Activated CD4-positive, alpha-beta T cell treated with anti-CD3 and anti-CD28 coated beads for 36 hours (primary cell): ENCODE measurements at regions of chr9 and their contacts with region 1.

Region 1: GRCh38 chr9:19184144-19184917 is 46.2 kb upstream of the DENND4C start:
- DNase-seq: peak; percentile 91
- ATAC-seq: peak; percentile 99
- H3K4me3 Mint-ChIP-seq: peak overlapping the region; percentile 56
- H3K27ac Mint-ChIP-seq: peak overlapping the region; percentile 91
- H3K4me1 Mint-ChIP-seq: peaks cover 21% of the 10 kb centered on the region
- H3K27me3 Mint-ChIP-seq: no peaks in the 10 kb centered on the region

Region 2: GRCh38 chr9:18741945-18742344 is 442.4 kb before region 1 on chr9:
- CTCF ChIA-PET with region 1: no interaction called
- POLR2A ChIA-PET with region 1: no interaction called
- intact Hi-C with region 1: no loop called
- DNase-seq: no peak
- ATAC-seq: no peak
- H3K4me3 Mint-ChIP-seq: no peak overlapping the region
- H3K27ac Mint-ChIP-seq: no peak overlapping the region
- H3K4me1 Mint-ChIP-seq: no peaks in the 10 kb centered on the region
- H3K27me3 Mint-ChIP-seq: no peaks in the 10 kb centered on the region

Region 3: DNA sequence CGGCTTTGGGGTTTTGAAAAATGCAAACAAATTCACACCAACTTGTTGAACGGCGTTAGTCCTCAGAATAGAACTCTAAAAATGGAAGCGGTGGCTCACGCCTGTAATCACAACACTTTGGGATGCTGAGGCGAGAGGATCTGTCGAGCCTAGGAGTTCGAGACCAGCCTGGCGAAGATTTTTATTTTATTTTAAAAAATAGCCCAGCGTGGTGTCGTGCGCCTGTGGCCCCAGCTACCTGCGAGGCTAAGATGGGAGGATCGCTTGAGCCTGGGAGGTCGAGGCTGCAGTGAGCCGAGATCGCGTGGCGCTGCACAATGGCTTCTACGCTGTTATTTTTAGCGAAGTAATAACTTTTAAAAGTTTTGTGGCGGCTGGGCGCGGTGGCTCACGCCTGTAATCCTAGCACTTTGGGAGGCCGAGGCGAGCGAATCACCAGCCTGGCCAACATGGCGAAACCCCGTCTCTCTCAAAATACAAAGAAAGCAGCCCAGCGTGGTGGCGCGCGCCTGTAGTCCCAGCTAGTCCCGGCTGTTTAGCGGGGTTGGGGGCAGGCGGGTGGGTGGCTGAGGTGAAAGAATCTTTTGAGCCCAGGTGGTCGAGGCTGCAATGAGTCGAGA is 56.3 kb before region 1 on chr9:
- CTCF ChIA-PET with region 1: no interaction called
- POLR2A ChIA-PET with region 1: no interaction called
- intact Hi-C with region 1: loop called (anchors 1 to 2 kb)
- DNase-seq: peak; percentile 54
- ATAC-seq: peak; percentile 14
- H3K4me3 Mint-ChIP-seq: peak overlapping the region; percentile 92
- H3K27ac Mint-ChIP-seq: peak overlapping the region; percentile 88
- H3K4me1 Mint-ChIP-seq: peaks cover 58% of the 10 kb centered on the region
- H3K27me3 Mint-ChIP-seq: no peaks in the 10 kb centered on the region

Region 4: DNA sequence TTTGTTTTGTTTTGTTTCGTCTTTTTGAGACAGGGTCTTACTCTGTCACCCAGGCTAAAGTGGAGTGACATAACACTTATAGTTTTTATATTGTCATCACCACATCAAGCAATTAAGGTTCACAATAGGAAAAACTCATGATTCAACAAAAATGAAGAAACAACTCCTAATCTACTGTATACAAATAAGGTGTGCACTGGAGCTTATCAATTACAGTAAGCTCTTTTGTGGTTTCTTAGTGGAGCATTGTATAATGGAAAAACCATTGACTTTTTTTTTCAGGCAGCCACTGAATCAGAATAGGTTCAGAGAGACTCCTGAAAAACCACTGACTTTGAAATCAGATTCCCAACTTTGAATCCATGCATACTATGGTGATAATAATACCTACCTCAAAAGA is 46.2 kb before region 1 on chr9:
- CTCF ChIA-PET with region 1: no interaction called
- POLR2A ChIA-PET with region 1: no interaction called
- intact Hi-C with region 1: no loop called
- DNase-seq: no peak
- ATAC-seq: no peak
- H3K4me3 Mint-ChIP-seq: no peak overlapping the region
- H3K27ac Mint-ChIP-seq: no peak overlapping the region
- H3K4me1 Mint-ChIP-seq: peaks cover 9% of the 10 kb centered on the region
- H3K27me3 Mint-ChIP-seq: no peaks in the 10 kb centered on the region

Region 5: DNA sequence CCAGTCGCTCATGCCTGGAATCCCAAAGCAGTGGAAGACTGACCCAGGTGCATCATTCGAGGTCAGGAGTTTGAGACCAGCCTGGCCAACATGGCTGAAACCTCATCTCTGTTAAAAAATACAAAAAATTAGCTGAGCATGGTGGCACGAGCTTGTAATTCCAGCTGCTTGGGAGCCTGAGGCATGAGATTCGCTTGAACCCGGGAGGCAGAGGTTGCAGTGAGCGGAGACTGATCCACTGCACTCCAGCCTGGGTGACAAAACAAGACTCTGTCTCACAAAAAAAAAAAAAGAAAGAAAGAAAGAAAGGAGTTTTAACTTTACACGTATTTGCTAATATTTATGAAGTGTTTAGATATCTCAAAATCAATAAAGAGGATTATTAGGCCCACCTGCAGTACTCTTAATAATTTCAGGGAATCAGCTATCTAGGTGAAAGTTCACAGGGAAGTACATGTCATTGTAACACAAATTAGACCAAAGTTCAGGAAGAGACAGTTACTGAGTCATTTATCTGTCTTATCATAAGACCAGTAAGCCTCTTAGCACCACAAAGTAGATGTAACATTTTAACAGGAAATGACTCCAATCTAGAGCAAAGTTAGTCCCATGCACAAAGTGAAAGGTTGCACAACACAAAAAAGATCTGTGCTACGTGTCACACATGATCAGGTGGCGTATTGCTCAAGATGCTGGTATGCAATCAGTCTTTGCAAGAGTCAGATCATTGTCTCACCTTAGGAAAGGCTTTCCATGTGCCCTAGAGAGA is 22.9 kb before region 1 on chr9:
- CTCF ChIA-PET with region 1: no interaction called
- POLR2A ChIA-PET with region 1: no interaction called
- intact Hi-C with region 1: loop called in 1 of 2 experiments (anchors 1 kb)
- DNase-seq: peak; percentile 78
- ATAC-seq: peak; percentile 98
- H3K4me3 Mint-ChIP-seq: peak overlapping the region; percentile 46
- H3K27ac Mint-ChIP-seq: peak overlapping the region; percentile 76
- H3K4me1 Mint-ChIP-seq: peaks cover 25% of the 10 kb centered on the region
- H3K27me3 Mint-ChIP-seq: no peaks in the 10 kb centered on the region

Region 6: GRCh38 chr9:19408693-19409400 is 224.5 kb after region 1 on chr9 and contains the start of gene ACER2:
- CTCF ChIA-PET with region 1: no interaction called
- POLR2A ChIA-PET with region 1: no interaction called
- intact Hi-C with region 1: loop called in 1 of 2 experiments (anchors 1 kb)
- DNase-seq: peak; percentile 96
- ATAC-seq: peak; percentile 96
- H3K4me3 Mint-ChIP-seq: peak within 1 kb of the TSS; percentile 89
- H3K27ac Mint-ChIP-seq: peak within 1 kb of the TSS; percentile 68
- H3K4me1 Mint-ChIP-seq: peaks cover 6% of the 10 kb centered on the region
- H3K27me3 Mint-ChIP-seq: no peaks in the 10 kb centered on the region
- total RNA-seq, gene ACER2: 1.5 to 1.6 TPM

Region 7: DNA sequence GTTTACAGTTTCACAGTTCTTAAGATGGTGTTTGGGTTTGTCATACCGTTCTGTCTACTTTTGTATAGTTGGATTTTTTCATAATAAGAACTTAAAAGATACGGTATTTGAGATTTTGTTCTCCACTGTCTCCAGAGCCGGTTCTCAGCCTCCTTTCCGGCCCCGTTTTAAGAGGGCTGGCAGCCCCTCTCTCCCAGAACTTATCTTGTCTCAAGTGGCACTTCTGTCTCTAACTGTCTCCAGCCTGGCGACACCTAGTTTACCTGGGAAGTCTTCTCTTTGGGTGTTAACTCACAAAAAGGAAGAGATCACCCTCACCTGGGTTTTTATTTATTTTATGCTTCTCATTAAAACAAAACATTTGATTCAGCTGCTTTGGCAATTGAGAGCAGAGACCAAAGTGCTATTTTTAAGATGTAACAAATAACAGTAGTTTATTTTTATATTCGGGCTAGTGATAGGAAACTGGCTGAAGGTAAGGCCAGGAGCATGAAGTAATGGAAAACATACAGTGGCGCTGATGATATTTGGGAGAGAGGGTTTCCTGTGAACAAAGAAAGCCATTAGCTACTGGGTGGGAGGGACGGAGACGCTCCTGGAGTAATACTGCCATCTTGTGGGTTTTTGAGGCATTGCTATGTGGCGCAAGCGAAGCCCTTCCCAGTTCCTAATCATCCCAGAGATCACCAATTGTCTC is 272.8 kb after region 1 on chr9:
- CTCF ChIA-PET with region 1: interaction called, 3 read pairs
- POLR2A ChIA-PET with region 1: no interaction called
- intact Hi-C with region 1: loop called (anchors 1 to 5 kb)
- DNase-seq: peak; percentile 76
- ATAC-seq: peak; percentile 92
- H3K4me3 Mint-ChIP-seq: no peak overlapping the region
- H3K27ac Mint-ChIP-seq: no peak overlapping the region
- H3K4me1 Mint-ChIP-seq: peaks cover 9% of the 10 kb centered on the region
- H3K27me3 Mint-ChIP-seq: no peaks in the 10 kb centered on the region